CD14-positive monocyte (primary cell): ENCODE measurements at regions of chr1 and their contacts with region 1.

Region 1: GRCh38 chr1:146012737-146013403 is 8.7 kb downstream of the HJV start:
- DNase-seq: peak; percentile 53 to 75 (median 71)
- H3K4me3 ChIP-seq: no peak overlapping the region
- H3K4me3 Mint-ChIP-seq: no peak overlapping the region
- H3K27ac ChIP-seq: no peak overlapping the region
- H3K27ac Mint-ChIP-seq: no peak overlapping the region
- H3K4me1 ChIP-seq: peaks cover 0 to 5% of the 10 kb centered on the region in 2 donors
- H3K4me1 Mint-ChIP-seq: peaks cover 10% of the 10 kb centered on the region
- H3K27me3 ChIP-seq: no peaks in the 10 kb centered on the region
- H3K27me3 Mint-ChIP-seq: peaks cover 8 to 16% (median 10%) of the 10 kb centered on the region in 3 donors
- CTCF ChIP-seq: peak; percentile 89

Region 2: GRCh38 chr1:145730900-145731299 is 282.0 kb before region 1 on chr1:
- intact Hi-C with region 1: no loop called
- DNase-seq: no peak
- H3K4me3 ChIP-seq: no peak overlapping the region
- H3K4me3 Mint-ChIP-seq: no peak overlapping the region
- H3K27ac ChIP-seq: no peak overlapping the region
- H3K27ac Mint-ChIP-seq: no peak overlapping the region
- H3K4me1 ChIP-seq: no peaks in the 10 kb centered on the region
- H3K4me1 Mint-ChIP-seq: no peaks in the 10 kb centered on the region
- H3K27me3 ChIP-seq: no peaks in the 10 kb centered on the region
- H3K27me3 Mint-ChIP-seq: peaks cover 0 to 1% (median 0%) of the 10 kb centered on the region in 3 donors
- CTCF ChIP-seq: no peak

Region 3: GRCh38 chr1:145845514-145846161 is 167.2 kb before region 1 on chr1 and contains the start of gene NUDT17:
- intact Hi-C with region 1: loop called (anchors 1 to 5 kb)
- DNase-seq: peak; percentile 64 to 72 (median 71)
- H3K4me3 ChIP-seq: peak within 1 kb of the TSS; percentile 72 to 98 (median 88)
- H3K4me3 Mint-ChIP-seq: no peak within 1 kb of the TSS
- H3K27ac ChIP-seq: peak within 1 kb of the TSS; percentile 63 to 90
- H3K27ac Mint-ChIP-seq: peak within 1 kb of the TSS in 3 of 7 donors; percentile 21 to 69 (median 58)
- H3K4me1 ChIP-seq: peaks cover 19 to 25% of the 10 kb centered on the region in 2 donors
- H3K4me1 Mint-ChIP-seq: peaks cover 6% of the 10 kb centered on the region
- H3K27me3 ChIP-seq: no peaks in the 10 kb centered on the region
- H3K27me3 Mint-ChIP-seq: peaks cover 0 to 3% (median 0%) of the 10 kb centered on the region in 3 donors
- CTCF ChIP-seq: peak; percentile 91
- polyA plus RNA-seq, gene NUDT17: 2.1 to 6.4 (median 3.1) TPM

Region 4: GRCh38 chr1:145891587-145892485 is 121.0 kb before region 1 on chr1:
- intact Hi-C with region 1: loop called (anchors 5 to 10 kb)
- DNase-seq: peak; percentile 41 to 61 (median 57)
- H3K4me3 ChIP-seq: no peak overlapping the region
- H3K4me3 Mint-ChIP-seq: no peak overlapping the region
- H3K27ac ChIP-seq: no peak overlapping the region
- H3K27ac Mint-ChIP-seq: no peak overlapping the region
- H3K4me1 ChIP-seq: no peaks in the 10 kb centered on the region
- H3K4me1 Mint-ChIP-seq: no peaks in the 10 kb centered on the region
- H3K27me3 ChIP-seq: no peaks in the 10 kb centered on the region
- H3K27me3 Mint-ChIP-seq: peaks cover 0 to 6% (median 3%) of the 10 kb centered on the region in 3 donors
- CTCF ChIP-seq: peak; percentile 87

Region 5: DNA sequence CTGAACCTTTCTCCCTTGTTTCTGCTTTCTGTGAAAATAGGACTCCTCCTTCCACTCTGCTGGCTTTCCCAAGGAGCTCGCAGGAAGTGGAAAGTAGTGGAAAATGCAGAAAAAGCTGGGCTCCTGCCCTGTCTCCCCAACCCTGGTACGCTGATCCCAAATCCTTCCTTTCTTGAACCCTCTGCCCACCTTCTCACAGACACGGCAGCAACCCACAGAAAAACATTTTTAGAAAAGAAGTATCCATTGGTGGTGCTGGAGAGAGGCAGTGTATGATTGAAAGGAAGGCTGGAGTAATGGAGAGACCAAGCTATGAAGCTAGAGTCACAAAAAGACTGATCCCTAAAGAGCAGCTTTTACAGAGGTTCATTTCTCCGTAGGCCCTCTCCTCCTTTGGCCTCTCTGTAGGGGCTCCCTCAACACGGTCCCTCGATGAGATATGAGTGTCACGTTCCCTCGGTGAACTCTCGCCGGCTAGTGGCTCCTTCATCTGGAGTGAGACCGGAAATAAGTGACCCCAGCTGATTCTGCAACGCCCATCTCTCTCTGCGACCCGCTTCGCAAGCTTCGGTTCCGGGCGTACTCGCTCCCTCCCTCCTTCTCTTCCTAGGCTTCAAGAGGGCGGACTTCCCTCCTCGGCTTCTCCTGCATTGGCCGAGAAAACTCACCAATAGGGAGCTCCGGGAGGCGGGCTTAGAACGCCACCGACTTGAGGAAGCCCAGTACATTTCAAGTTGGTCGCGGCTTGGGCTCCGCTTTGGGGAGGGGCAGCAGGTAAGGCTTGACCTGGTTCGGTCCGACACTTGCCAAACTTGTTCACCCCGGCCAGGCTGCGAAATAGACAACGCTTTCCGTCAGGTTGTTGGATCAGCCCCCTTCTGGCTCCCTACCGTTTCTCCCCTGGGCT is 48.6 kb before region 1 on chr1 and contains the starts of genes ANKRD34A and POLR3GL:
- intact Hi-C with region 1: no loop called
- DNase-seq: peak; percentile 83 to 92 (median 87)
- H3K4me3 ChIP-seq: peak within 1 kb of the TSS; percentile 55 to 89 (median 59)
- H3K4me3 Mint-ChIP-seq: peak within 1 kb of the TSS; percentile 94 to 96
- H3K27ac ChIP-seq: peak within 1 kb of the TSS; percentile 31 to 82
- H3K27ac Mint-ChIP-seq: peak within 1 kb of the TSS; percentile 62 to 96 (median 88)
- H3K4me1 ChIP-seq: peaks cover 52 to 61% of the 10 kb centered on the region in 2 donors
- H3K4me1 Mint-ChIP-seq: peaks cover 57% of the 10 kb centered on the region
- H3K27me3 ChIP-seq: peaks cover 6 to 31% of the 10 kb centered on the region in 2 donors
- H3K27me3 Mint-ChIP-seq: peaks cover 30 to 36% (median 30%) of the 10 kb centered on the region in 3 donors
- CTCF ChIP-seq: no peak
- polyA plus RNA-seq, gene ANKRD34A: 0.31 TPM in 1 of 3 donors, not detected in the others
- polyA plus RNA-seq, gene POLR3GL: 11.6 to 39.0 (median 36.2) TPM

Region 6: DNA sequence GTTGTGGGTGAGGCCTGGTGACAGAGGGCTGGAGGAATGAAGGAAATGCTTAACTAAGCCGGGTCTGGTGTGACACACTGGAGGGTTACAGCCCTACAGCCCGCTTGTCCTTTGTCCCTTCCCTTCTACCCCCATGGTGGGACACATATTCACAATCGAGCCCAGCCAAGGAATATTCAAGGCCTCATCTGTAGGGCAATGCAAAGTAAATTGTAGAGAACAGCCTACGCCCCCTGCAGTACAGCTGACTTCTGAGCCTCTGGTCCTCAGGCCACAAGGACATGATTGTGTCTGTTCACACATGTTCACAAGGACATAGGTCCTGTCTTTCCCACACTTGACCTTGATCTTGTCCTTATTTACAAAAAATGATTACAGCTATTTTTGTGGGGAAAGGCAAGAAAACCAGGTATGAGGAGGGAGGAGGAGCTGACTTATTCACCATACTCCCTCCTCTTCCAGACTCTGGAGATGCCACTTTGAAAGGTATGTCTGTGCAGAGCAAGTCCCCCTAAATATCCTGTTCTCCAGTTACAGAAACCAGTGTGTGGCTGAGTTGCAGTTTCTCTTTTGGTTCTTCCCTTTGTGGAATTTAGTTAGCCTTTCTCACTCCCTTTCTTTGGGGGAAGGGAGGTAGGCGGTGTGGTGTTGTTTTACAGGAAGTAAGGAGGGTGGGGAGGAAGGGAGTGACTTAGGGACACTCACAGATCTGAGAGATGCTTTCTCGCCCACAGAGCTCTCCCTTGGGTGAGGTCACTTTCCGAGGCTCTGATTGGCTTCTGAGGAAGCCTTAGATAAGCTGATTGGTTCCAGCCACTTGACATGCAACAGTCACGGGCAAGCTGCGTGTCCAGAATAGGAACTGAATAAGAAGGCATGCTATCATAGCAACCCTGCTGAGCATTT is 33.8 kb before region 1 on chr1:
- intact Hi-C with region 1: loop called (anchors 2 kb)
- DNase-seq: peak; percentile 98 to 100 (median 100)
- H3K4me3 ChIP-seq: peak overlapping the region; percentile 26 to 74 (median 69)
- H3K4me3 Mint-ChIP-seq: no peak overlapping the region
- H3K27ac ChIP-seq: peak overlapping the region; percentile 85 to 99
- H3K27ac Mint-ChIP-seq: no peak overlapping the region
- H3K4me1 ChIP-seq: peaks cover 55 to 71% of the 10 kb centered on the region in 2 donors
- H3K4me1 Mint-ChIP-seq: peaks cover 29% of the 10 kb centered on the region
- H3K27me3 ChIP-seq: no peaks in the 10 kb centered on the region
- H3K27me3 Mint-ChIP-seq: peaks cover 0 to 2% (median 0%) of the 10 kb centered on the region in 3 donors
- CTCF ChIP-seq: peak; percentile 22

Region 7: DNA sequence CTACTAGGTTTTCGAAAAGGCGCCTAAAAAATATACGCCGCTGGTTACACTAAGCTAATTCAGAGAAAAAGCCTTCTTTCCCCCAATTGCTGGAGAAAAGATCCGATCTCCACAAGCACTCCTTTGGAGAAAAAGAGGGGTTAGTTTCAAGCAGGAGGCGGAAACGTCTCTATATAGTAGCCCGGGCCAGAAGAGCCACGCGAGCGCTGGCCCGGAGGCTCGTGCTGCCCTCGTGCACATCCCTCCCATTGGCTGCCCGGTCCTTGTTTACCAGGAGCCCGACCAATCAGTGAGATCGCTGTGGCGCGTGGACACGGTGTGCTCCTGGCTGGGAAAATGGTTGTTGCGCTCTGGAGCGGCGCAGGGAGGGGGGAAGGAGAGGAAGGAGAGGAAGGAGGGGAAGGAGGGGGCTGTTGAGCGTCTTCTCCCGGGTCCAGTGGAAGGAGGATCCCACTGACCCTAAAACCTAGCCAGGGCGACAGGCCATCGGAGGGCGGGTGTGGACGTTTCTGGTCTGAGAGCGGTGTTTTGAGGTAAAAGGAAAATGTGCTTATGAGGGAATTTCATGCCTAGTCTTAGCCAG is 16.3 kb before region 1 on chr1 and contains the start of gene TXNIP:
- intact Hi-C with region 1: loop called in 1 of 2 experiments (anchors 2 kb)
- DNase-seq: peak; percentile 91 to 97 (median 96)
- H3K4me3 ChIP-seq: peak within 1 kb of the TSS; percentile 87 to 100 (median 99)
- H3K4me3 Mint-ChIP-seq: peak within 1 kb of the TSS; percentile 99 to 100
- H3K27ac ChIP-seq: peak within 1 kb of the TSS; percentile 78 to 84
- H3K27ac Mint-ChIP-seq: peak within 1 kb of the TSS; percentile 93 to 99 (median 97)
- H3K4me1 ChIP-seq: peaks cover 46 to 67% of the 10 kb centered on the region in 2 donors
- H3K4me1 Mint-ChIP-seq: peaks cover 65% of the 10 kb centered on the region
- H3K27me3 ChIP-seq: no peaks in the 10 kb centered on the region
- H3K27me3 Mint-ChIP-seq: peaks cover 0 to 5% (median 0%) of the 10 kb centered on the region in 3 donors
- CTCF ChIP-seq: no peak
- polyA plus RNA-seq, gene TXNIP: 640 to 3,778 (median 844) TPM

Region 8: DNA sequence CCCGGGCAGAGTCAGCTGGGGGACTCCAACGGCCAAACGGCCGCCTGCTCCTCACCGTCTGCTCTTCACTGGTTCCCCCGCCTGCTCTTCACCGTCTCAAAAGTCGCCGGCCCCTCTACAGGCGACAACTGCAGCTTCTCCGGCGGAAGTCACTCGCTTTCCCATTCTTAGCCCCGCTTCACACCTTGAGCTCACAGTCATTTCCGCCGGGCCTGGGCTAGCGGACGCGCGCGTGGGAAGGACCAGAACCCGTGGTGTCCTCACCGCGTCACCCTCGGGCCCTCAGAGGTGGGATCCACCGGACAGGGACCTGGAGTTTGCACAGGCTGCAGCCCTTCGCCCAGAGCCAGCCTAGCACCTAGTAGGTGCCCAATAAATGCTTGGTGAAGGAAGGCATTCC is 36.6 kb after region 1 on chr1:
- intact Hi-C with region 1: no loop called
- DNase-seq: no peak
- H3K4me3 ChIP-seq: no peak overlapping the region
- H3K4me3 Mint-ChIP-seq: peak overlapping the region; percentile 16 to 35
- H3K27ac ChIP-seq: no peak overlapping the region
- H3K27ac Mint-ChIP-seq: no peak overlapping the region
- H3K4me1 ChIP-seq: peaks cover 15 to 17% of the 10 kb centered on the region in 2 donors
- H3K4me1 Mint-ChIP-seq: peaks cover 30% of the 10 kb centered on the region
- H3K27me3 ChIP-seq: no peaks in the 10 kb centered on the region
- H3K27me3 Mint-ChIP-seq: peaks cover 1 to 6% (median 4%) of the 10 kb centered on the region in 3 donors
- CTCF ChIP-seq: no peak